Dendritic cell treated with granulocyte-macrophage colony-stimulating factor and Interleukin-4, amounts not matched to agents 40 ng/mL and 50 ng/mL, for 4 days (primary cell): ENCODE measurements at regions of chr6 and their contacts with region 1.

Region 1: GRCh38 chr6:167699141-167699931 is 127.4 kb upstream of the AFDN start:
- H3K4me3 Mint-ChIP-seq: peak overlapping the region; percentile 74
- H3K27ac Mint-ChIP-seq: peak overlapping the region; percentile 95
- H3K4me1 Mint-ChIP-seq: peaks cover 27% of the 10 kb centered on the region
- H3K27me3 Mint-ChIP-seq: peaks cover 8% of the 10 kb centered on the region

Region 2: DNA sequence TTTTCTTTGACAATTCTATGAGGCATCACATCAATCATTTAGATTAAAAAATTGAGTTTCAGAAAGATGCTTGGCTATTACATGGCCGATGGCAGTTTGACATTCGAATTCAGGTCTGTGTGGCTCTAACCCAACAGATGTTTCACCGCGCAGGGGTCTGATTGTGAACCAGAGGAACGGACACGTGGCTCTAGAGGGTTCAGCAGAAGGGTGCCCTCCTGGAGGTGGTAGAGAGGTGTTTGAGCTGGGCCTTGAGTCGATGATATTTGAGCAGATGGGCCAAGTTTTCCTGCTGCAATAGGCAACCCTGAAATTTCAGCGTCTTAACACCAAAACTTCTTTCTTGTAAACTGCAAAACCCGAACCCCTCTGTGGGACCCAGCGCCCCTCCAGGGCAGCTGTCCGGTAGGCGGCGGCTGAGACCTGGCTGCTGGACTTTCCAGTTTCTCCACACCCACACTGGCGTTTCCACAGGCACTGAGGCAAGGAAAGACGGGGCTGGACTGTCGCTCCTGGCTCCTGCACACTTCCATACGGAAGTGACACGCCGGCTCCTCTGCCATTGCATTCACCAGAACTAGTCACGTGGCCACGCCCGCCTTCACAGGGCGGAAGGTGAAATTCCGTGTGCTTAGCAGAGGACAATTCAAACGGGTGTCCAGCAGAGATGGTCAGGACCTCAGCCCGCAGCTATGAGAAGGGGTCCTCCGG is 116.1 kb after region 1 on chr6:
- intact Hi-C with region 1: loop called (anchors 10 kb)
- H3K4me3 Mint-ChIP-seq: peak overlapping the region; percentile 38
- H3K27ac Mint-ChIP-seq: no peak overlapping the region
- H3K4me1 Mint-ChIP-seq: no peaks in the 10 kb centered on the region
- H3K27me3 Mint-ChIP-seq: peaks cover 50% of the 10 kb centered on the region

Region 3: GRCh38 chr6:167987396-167988153 is 288.2 kb after region 1 on chr6:
- intact Hi-C with region 1: no loop called
- H3K4me3 Mint-ChIP-seq: no peak overlapping the region
- H3K27ac Mint-ChIP-seq: no peak overlapping the region
- H3K4me1 Mint-ChIP-seq: no peaks in the 10 kb centered on the region
- H3K27me3 Mint-ChIP-seq: no peaks in the 10 kb centered on the region